Endothelial cell of umbilical vein (primary cell): ENCODE measurements at regions of chr20 and their contacts with region 1.

Region 1: GRCh38 chr20:63537525-63538203 is 488 bp upstream of the PTK6 start:
- DNase-seq: peak; percentile 90
- H3K4me3 ChIP-seq: peak overlapping the region in 1 of 3 experiments; percentile 34
- H3K27ac ChIP-seq: no peak overlapping the region
- H3K4me1 ChIP-seq: no peaks in the 10 kb centered on the region
- H3K27me3 ChIP-seq: no peaks in the 10 kb centered on the region
- CTCF ChIP-seq: peak; percentile 86 to 98
- POLR2A ChIP-seq: peak; percentile 41

Region 2: GRCh38 chr20:63351811-63352591 is 185.7 kb before region 1 on chr20:
- CTCF ChIA-PET with region 1: no interaction called
- POLR2A ChIA-PET with region 1: no interaction called
- dilution Hi-C with region 1: no loop called
- intact Hi-C with region 1: no loop called
- DNase-seq: no peak
- H3K4me3 ChIP-seq: no peak overlapping the region
- H3K27ac ChIP-seq: no peak overlapping the region
- H3K4me1 ChIP-seq: no peaks in the 10 kb centered on the region
- H3K27me3 ChIP-seq: no peaks in the 10 kb centered on the region
- CTCF ChIP-seq: no peak
- POLR2A ChIP-seq: no peak

Region 3: DNA sequence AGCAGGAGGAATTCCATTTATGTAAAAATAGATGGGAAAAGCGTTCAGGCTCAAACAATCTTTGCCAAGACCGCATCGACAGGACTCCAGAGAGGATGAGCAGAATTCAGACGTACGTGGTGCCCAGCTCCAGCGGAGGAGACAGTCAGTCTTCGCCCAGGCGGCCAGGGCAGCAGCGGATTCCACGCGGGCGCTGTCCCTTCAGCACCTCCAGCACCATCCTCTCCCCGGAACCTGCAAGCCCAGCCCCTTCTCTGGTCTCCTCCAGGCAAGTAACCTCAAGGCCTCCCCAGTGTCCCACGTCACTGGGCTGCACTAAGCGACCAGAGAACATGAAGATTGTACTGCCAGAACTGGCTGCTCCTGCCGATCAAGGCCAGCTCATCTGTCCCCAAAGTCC is 62.5 kb before region 1 on chr20:
- CTCF ChIA-PET with region 1: no interaction called
- POLR2A ChIA-PET with region 1: no interaction called
- dilution Hi-C with region 1: no loop called
- intact Hi-C with region 1: no loop called
- DNase-seq: no peak
- H3K4me3 ChIP-seq: no peak overlapping the region
- H3K27ac ChIP-seq: no peak overlapping the region
- H3K4me1 ChIP-seq: no peaks in the 10 kb centered on the region
- H3K27me3 ChIP-seq: peaks cover 31 to 34% of the 10 kb centered on the region in 2 experiments
- CTCF ChIP-seq: no peak
- POLR2A ChIP-seq: no peak

Region 4: DNA sequence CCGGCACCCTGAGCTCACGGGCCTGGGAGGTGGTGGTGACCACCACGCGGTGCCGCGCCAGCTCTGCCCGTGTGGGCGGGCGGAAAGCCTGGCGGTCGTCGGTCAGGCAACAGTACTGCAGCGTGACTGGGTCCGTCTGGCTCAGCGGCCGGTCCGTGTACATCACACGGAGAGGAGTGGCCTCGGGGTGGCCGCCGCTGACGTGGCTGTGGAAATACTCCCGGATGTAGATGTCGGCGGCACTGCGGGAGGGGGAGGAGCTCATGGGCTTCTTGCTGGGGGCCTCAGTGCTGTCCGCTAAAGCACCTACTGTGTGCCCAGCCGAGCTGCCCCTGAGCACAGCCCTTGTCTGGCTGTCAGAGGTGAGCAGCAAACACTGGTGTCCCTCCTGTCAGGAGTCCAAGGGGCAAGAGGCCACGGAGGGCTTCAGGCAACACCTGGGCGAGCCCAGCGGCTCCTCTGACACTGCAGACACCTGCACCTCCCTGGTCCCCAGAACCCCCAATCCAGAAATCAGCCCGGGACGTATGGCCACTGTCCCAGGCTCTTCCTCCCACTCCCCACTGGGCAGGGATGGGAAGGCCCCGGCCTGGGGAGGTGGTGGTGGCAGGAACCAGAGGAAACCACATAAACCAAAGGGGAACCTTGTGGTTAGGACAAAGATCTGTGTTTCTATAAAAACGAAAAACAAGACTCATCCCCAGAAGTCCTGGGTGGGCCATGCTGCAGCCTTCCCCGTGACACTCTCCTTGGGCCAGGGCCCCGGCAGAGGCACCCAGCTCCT is 29.9 kb after region 1 on chr20:
- CTCF ChIA-PET with region 1: no interaction called
- POLR2A ChIA-PET with region 1: no interaction called
- dilution Hi-C with region 1: no loop called
- intact Hi-C with region 1: no loop called
- DNase-seq: no peak
- H3K4me3 ChIP-seq: no peak overlapping the region
- H3K27ac ChIP-seq: no peak overlapping the region
- H3K4me1 ChIP-seq: no peaks in the 10 kb centered on the region
- H3K27me3 ChIP-seq: no peaks in the 10 kb centered on the region
- CTCF ChIP-seq: no peak
- POLR2A ChIP-seq: no peak

Region 5: DNA sequence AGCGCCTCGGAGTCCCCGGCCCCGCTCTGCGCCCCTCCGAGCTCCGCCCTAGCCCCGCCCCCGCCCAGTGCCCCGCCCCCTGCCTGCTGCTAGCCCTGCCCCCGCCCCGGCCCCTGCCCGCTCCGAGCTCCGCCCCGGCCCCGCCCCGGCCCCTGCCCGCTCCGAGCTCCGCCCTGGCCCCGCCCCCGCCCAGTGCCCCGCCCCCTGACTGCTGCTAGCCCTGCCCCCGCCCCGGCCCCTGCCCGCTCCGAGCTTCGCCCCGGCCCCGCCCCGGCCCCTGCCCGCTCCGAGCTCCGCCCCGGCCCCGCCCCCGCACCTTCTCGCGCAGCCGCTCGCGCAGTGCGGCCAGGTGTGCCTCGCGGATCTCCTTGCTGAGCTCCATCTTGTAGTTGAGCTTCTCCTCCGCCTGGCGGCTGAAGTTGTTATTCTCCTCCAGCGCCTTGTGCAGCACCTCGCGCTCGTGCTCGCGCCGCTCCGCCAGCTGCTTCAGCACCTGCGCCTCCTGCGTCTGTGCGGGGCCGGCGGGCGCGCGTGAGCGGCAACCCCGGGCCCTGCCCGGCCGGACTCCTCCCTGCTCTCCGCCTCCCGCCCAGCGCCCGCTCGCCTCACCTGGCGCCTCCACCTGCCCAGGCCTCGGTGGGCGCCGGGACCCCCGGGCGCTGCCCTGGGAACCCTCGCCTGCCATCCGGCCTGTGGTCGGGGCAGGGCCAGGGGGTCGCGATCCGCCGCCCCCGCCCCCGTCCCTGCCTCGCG is 104.3 kb after region 1 on chr20:
- CTCF ChIA-PET with region 1: interaction called, 14 read pairs
- POLR2A ChIA-PET with region 1: no interaction called
- dilution Hi-C with region 1: no loop called
- intact Hi-C with region 1: no loop called
- DNase-seq: peak; percentile 57
- H3K4me3 ChIP-seq: peak overlapping the region; percentile 11 to 50 (median 20)
- H3K27ac ChIP-seq: no peak overlapping the region
- H3K4me1 ChIP-seq: peaks cover 2% of the 10 kb centered on the region
- H3K27me3 ChIP-seq: no peaks in the 10 kb centered on the region
- CTCF ChIP-seq: peak in 1 of 2 donors; percentile 37
- POLR2A ChIP-seq: no peak

Region 6: DNA sequence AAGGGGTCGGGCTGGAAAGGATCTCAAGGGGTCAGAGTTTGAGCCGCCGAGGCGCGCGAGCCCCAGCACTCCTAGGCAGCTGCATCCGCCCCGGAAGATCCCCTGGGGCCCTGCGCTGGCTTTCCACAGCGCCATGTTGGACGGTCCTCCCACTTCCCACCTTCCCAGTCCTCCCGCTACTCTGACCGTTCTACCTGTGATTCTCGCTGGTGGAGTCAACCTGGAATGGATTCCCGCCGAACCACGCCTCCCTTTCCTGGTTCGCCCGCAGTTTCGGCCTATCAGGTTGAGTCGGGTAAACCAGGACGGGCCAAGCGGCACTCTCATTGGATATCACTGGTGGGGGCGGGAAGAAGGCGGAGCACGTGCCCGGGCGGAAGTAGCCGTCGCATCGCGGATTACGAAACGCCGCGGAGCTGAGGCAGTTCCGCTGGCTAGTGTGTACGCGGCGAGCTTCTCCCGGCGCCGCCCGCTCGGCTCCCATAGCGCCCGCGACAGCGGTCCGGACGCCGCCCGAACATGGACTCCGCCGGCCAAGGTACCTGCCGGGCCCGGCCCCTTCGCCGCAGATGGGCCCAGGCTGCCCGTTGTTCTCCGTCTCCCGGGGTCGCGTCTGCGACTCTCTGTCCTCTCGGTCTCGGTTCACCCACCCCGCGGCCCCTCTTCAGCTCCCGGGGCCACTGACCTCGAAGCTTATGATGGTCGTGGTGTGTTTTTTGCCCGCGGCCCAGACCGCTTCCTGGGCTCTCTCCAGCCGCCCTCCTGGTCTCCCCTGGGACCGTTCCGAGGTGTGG is 327.4 kb after region 1 on chr20 and contains the start of gene TPD52L2:
- CTCF ChIA-PET with region 1: interaction called, 16 read pairs
- POLR2A ChIA-PET with region 1: interaction called, 6 read pairs
- dilution Hi-C with region 1: no loop called
- intact Hi-C with region 1: loop called (anchors 1 kb)
- DNase-seq: peak; percentile 99
- H3K4me3 ChIP-seq: peak within 1 kb of the TSS; percentile 62 to 77 (median 68)
- H3K27ac ChIP-seq: peak within 1 kb of the TSS; percentile 69
- H3K4me1 ChIP-seq: peaks cover 5% of the 10 kb centered on the region
- H3K27me3 ChIP-seq: no peaks in the 10 kb centered on the region
- CTCF ChIP-seq: no peak
- POLR2A ChIP-seq: peak; percentile 90
- total RNA-seq, gene TPD52L2: 114 and 123 TPM in 2 replicates

Region 7: DNA sequence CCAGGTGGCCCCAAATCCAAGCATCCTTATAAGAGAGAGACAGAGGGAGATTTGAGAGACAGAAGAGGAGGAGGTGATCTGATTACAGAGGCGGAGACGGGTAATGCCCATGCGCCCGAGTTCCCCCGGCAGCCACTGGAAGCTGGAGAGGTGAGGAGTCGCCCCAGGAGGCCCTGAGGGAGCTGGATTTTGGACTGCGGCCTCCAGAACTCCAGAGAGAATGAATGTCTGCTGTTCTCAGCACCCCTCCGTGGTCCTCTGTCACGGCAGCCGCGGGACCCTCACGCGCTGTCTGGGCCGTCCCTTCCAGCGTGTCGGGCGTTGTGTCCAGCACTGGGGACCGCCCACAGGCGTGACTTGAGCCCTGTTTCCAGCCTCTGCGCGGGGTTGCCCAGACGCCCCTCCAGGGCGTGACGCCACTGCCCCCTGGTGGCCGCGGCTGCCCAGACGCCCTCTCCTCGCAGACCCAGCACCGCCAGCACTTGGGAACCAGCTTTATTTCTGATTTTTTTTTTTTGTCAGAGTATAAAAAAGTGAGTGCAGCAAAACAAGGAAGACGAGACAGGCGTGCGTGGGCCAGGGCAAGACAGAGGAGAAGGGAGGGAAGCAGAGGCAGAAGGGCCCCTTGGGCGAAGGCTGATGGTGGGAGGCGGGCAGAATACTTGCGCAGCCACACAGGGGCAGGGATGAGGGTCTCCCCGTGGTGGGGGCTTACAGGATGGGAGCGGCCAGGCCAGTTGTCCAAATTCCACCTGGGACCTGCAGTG is 436.2 kb after region 1 on chr20:
- CTCF ChIA-PET with region 1: interaction called, 89 read pairs
- POLR2A ChIA-PET with region 1: interaction called, 3 read pairs
- dilution Hi-C with region 1: no loop called
- intact Hi-C with region 1: loop called (anchors 1 kb)
- DNase-seq: peak; percentile 87
- H3K4me3 ChIP-seq: peak overlapping the region in 2 of 3 experiments; percentile 7 to 35
- H3K27ac ChIP-seq: no peak overlapping the region
- H3K4me1 ChIP-seq: peaks cover 23% of the 10 kb centered on the region
- H3K27me3 ChIP-seq: no peaks in the 10 kb centered on the region
- CTCF ChIP-seq: peak; percentile 99
- POLR2A ChIP-seq: peak; percentile 63

Region 8: DNA sequence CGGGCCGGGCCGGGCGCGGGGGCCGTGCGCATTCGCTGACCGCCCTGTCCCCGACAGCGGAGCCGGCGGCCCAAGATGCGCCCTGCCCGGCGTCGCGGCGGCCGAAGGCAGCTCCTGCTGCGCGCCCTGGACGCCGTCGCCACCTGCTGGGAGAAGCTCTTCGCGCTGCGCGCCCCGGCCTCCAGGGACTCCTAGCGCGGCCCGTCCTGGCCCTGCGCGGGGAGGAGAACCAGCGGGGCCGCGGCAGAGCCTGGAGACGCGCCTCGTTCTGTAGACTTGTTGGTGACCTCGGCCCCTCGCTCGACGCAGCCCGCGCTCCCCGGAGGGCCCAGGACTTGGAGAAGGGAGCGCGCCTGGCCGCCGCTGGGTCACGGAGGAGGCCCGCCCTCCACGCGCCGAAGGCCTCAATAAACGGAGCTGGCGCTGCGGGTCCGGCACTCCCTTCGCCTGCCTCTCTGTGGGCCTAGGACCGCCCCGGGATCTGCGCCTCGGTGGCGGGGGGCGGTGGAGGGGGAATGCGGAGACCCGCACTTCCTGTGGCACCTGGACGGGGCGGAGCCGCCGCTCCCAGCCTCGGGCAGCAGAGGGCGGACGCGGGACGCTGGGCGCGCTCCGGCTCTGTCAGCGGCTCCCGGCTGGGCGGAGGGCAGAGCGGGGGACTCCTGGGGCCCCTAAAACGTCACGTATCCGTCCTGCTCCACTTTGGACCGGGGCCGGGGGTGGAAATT is 501.1 kb after region 1 on chr20:
- CTCF ChIA-PET with region 1: interaction called, 22 read pairs
- POLR2A ChIA-PET with region 1: no interaction called
- dilution Hi-C with region 1: no loop called
- intact Hi-C with region 1: no loop called
- DNase-seq: peak; percentile 96
- H3K4me3 ChIP-seq: peak overlapping the region in 2 of 3 experiments; percentile 46 to 65
- H3K27ac ChIP-seq: peak overlapping the region; percentile 25
- H3K4me1 ChIP-seq: peaks cover 42% of the 10 kb centered on the region
- H3K27me3 ChIP-seq: no peaks in the 10 kb centered on the region
- CTCF ChIP-seq: peak; percentile 55 to 85
- POLR2A ChIP-seq: no peak

Region 9: GRCh38 chr20:64119681-64120341 is 582.1 kb after region 1 on chr20:
- CTCF ChIA-PET with region 1: interaction called, 13 read pairs
- POLR2A ChIA-PET with region 1: no interaction called
- dilution Hi-C with region 1: no loop called
- intact Hi-C with region 1: loop called (anchors 1 kb)
- DNase-seq: peak; percentile 8
- H3K4me3 ChIP-seq: no peak overlapping the region
- H3K27ac ChIP-seq: no peak overlapping the region
- H3K4me1 ChIP-seq: no peaks in the 10 kb centered on the region
- H3K27me3 ChIP-seq: peaks cover 9 to 10% of the 10 kb centered on the region in 2 experiments
- CTCF ChIP-seq: no peak
- POLR2A ChIP-seq: no peak